ENCODE measurements at regions of chr6 and their contacts with region 1.

Region 1: DNA sequence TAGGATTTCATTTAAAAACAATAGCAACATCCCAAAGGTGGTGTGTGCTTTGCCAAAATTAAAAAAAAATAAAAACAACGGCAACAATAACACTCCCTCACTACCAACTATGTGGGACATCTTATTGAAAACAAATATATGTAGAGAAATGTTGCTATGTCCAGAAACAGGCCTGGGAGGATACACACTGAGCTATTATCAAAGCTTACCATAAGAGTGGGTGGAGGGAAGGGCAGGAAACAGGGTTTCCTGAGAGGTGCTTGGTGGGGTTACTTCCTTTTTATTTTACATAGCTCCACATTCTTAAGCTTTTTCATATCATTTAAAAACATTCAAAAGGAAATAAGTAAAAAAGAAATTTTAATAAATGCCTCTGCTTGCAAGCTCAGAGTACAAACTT is 150.0 kb upstream of the RIPOR2 start:
- DNase-seq: no peak
- ATAC-seq: no peak

Region 2: DNA sequence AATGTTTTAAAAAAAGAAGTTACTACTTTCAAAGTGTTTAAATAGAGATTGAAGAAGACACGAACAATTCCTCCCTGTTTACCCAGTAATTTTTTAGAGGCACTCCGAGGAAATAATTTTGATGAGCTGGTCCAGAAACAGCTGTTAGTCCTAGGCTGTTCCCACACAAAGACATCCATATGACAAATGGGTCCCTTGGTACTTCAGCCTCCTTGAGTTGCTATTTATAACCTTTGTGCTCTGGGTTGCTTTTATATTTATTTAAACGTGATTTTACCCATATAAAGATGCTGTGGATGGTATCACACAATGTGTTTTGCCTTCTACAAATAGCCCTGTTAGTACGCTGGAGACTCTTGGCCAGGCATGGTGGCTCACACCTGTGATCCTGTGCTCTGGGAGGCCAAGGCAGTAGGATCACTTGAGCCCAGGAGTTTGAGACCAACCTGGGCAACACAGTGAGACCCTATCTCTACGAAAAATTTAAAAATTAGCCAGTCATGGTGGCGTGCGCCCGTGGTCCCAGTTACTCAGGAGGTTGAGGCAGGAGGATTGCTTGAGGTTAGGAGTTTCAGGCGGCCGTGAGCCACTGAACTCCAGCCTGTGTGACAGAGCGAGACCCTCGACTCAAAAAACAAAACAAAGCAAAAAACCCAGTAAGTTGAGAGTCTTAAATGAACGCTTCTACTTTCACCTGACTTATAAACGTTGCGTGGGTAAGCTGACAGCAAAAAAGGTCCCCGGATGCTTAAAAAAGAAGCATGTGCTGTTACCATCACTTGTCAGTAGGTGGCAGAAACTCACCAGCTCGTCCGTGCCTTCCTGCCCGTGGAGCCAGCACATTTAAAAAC is 230.1 kb before region 1 on chr6:
- intact Hi-C with region 1: no loop called
- DNase-seq: peak; percentile 80
- ATAC-seq: no peak

Region 3: GRCh38 chr6:25179051-25179778 is 93.5 kb after region 1 on chr6:
- intact Hi-C with region 1: loop called (anchors 1 kb)
- DNase-seq: no peak
- ATAC-seq: no peak

Region 4: DNA sequence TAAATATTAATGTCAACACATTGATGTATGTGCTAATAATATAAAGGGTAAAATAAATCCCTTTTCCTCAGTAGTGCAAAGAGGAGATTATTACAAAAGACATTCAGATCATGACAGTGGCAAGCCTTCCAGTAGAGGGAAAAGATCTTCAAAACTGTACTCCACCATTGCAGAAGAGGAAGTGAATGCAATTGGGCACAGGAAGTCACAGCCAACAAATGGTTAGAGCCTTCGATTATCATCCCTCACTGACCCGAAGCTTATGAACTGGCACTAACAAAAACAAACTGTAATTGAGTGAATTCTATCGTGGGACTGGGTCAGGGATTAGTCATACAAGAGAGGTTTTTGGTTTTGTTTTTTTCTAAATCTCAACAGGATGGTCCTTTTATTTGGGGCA is 526.9 kb after region 1 on chr6:
- intact Hi-C with region 1: no loop called
- DNase-seq: no peak
- ATAC-seq: no peak

Measured in Right ventricle myocardium inferior (tissue), 1 donor.